Activated naive CD4-positive, alpha-beta T cell treated with anti-CD3 and anti-CD28 coated beads, Interleukin-2, amount 10 ng/mL, durations not matched to agents 7 days and 5 days (primary cell): ENCODE measurements at regions of chr5 and their contacts with region 1.

Region 1: GRCh38 chr5:58460732-58461286 is 923 bp upstream of the PLK2 start:
- DNase-seq: peak; percentile 93
- H3K4me3 Mint-ChIP-seq: peak overlapping the region; percentile 79
- H3K27ac Mint-ChIP-seq: peak overlapping the region; percentile 30
- H3K4me1 Mint-ChIP-seq: peaks cover 27% of the 10 kb centered on the region
- H3K27me3 Mint-ChIP-seq: peaks cover 21% of the 10 kb centered on the region

Region 2: GRCh38 chr5:57298295-57298984 is 1162.4 kb before region 1 on chr5:
- CTCF ChIA-PET with region 1: interaction called, 75 read pairs
- DNase-seq: peak; percentile 89
- H3K4me3 Mint-ChIP-seq: peak overlapping the region; percentile 47
- H3K27ac Mint-ChIP-seq: no peak overlapping the region
- H3K4me1 Mint-ChIP-seq: peaks cover 24% of the 10 kb centered on the region
- H3K27me3 Mint-ChIP-seq: peaks cover 13% of the 10 kb centered on the region

Region 3: DNA sequence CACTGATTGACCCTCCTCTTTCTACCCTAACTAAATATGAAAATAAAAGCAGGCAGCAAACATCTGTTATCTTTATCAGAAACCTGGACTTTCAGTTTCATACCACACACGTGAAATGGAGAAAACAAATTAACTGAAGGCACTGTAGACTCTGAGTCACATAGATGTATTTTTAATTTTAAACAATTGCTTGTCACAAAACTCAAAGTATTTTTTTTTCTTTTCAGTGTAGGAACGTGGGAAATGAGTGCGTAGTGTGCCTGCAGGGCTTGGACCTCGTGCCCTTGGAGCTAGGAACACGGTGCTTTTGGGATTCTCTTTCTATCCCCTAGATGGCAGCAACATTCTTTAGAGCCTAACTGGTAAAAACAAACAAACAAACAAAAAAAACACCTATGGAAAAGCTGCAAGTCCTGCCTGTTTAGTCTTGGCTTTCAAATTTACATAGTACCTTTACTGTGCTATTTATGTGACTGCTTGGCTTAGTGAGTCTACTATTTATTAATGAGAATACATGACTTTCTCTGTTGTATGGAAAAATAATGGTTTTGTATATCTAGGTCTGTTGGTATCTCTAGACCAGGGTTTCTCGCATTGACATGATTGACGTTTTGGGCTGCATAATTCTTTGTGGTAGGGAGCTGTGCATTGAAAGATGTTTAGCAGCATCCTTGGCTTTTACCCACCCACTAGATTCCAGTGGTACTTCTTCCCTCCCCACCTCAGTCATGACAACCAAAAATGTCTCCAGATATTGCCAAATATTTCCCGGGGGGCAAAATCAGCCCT is 961.4 kb before region 1 on chr5:
- CTCF ChIA-PET with region 1: interaction called, 70 read pairs
- DNase-seq: peak; percentile 38
- H3K4me3 Mint-ChIP-seq: peak overlapping the region; percentile 68
- H3K27ac Mint-ChIP-seq: peak overlapping the region; percentile 83
- H3K4me1 Mint-ChIP-seq: peaks cover 45% of the 10 kb centered on the region
- H3K27me3 Mint-ChIP-seq: peaks cover 4% of the 10 kb centered on the region

Region 4: GRCh38 chr5:57650360-57651069 is 810.3 kb before region 1 on chr5:
- CTCF ChIA-PET with region 1: interaction called, 22 read pairs
- DNase-seq: peak; percentile 41
- H3K4me3 Mint-ChIP-seq: no peak overlapping the region
- H3K27ac Mint-ChIP-seq: no peak overlapping the region
- H3K4me1 Mint-ChIP-seq: no peaks in the 10 kb centered on the region
- H3K27me3 Mint-ChIP-seq: peaks cover 16% of the 10 kb centered on the region

Region 5: DNA sequence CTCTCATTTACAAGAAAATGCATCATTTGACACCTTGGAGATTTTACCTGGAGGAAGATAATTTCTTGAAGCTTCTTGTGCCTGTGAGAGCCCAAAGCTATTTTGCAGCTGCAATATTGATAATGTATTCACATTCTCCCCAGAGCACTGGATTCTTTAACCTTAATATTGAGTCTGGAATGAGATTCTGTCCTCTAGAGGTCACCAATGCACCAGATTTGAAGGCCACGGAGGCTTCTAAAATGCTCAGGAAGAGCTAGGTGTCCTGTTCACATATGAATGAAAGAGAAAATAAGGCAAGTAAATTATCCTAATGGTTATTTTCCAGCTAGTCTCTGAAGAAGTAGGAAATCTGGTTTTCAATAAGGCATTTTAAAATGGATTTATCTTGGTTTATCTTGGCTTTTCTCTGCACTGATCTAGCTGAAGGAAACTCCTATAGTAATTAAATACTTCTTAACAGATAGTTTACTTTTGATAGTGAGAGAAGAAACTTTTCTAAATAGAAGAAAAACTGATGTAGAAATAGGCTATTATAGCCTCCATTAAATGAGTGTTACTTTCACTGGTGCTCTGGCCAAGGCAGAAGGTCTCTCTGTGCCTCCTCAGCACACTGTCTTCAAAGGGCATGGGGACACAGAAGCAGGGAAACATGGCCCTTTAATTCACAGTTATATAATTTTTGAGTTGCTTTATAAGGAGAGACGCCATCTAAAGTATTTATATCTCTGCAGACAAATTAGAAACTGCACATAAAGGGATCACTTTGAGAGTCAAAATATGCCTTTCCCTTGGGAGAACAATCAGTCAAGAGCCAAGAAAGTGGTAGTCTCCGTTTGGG is 681.2 kb before region 1 on chr5:
- CTCF ChIA-PET with region 1: interaction called, 54 read pairs
- DNase-seq: peak; percentile 27
- H3K4me3 Mint-ChIP-seq: no peak overlapping the region
- H3K27ac Mint-ChIP-seq: no peak overlapping the region
- H3K4me1 Mint-ChIP-seq: no peaks in the 10 kb centered on the region
- H3K27me3 Mint-ChIP-seq: peaks cover 5% of the 10 kb centered on the region

Region 6: DNA sequence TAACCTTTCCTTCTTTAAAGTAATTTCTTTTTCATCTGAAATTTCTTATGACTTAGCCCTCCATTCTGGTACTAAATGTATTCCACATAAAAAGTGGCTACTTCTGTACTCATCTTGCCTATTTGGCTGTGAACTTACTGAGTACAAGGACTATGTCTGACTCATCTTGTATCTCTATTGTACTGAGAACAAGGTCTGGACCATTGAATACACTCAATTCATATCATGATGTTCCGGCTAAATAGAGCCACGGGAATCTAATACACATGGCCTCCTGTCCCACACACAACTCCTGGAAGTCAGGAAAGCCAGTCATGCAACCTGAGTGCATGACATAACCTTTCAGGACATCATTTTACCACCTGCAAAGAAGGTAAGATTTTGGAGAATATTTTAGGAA is 204.8 kb before region 1 on chr5:
- CTCF ChIA-PET with region 1: no interaction called
- DNase-seq: no peak
- H3K4me3 Mint-ChIP-seq: no peak overlapping the region
- H3K27ac Mint-ChIP-seq: no peak overlapping the region
- H3K4me1 Mint-ChIP-seq: no peaks in the 10 kb centered on the region
- H3K27me3 Mint-ChIP-seq: no peaks in the 10 kb centered on the region

Region 7: DNA sequence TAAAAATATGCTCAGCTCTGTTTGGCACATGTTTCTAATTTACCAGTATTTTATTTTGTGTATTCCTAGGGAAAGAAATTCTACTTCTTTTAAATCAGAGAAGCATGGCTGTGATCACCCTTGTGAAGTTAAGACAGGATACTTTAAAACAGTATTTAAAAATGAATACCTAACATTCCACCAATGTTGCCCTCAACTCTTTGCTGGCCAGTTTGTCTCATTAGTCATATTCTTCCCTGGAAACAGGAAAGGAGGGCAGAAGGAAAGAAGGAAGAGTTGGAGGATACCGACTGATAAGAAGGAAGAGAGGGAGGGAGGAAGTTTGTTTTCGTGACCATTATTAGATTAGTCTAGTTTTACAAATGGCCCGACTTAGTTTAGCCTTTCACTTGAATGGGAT is 138.4 kb before region 1 on chr5:
- CTCF ChIA-PET with region 1: no interaction called
- DNase-seq: no peak
- H3K4me3 Mint-ChIP-seq: no peak overlapping the region
- H3K27ac Mint-ChIP-seq: no peak overlapping the region
- H3K4me1 Mint-ChIP-seq: no peaks in the 10 kb centered on the region
- H3K27me3 Mint-ChIP-seq: no peaks in the 10 kb centered on the region

Region 8: DNA sequence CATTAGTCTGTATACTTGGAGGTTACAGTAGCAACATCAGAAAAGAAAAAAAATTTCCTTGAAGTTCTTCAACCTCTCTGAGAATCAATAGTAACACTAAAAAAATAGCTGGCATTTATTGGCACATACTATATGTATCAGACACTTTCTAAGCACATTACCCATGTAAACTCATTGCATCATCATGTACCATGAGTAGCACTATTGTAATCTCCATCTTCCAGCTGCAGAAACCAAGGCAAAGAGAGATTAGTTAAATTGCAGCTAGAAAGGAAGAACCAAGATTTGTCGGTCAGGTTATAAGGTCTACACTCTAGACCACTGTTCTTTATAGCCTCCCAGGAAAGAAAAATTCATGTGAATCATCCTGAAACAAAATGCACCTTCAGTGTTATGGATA is 90.7 kb after region 1 on chr5:
- CTCF ChIA-PET with region 1: no interaction called
- DNase-seq: no peak
- H3K4me3 Mint-ChIP-seq: no peak overlapping the region
- H3K27ac Mint-ChIP-seq: no peak overlapping the region
- H3K4me1 Mint-ChIP-seq: no peaks in the 10 kb centered on the region
- H3K27me3 Mint-ChIP-seq: no peaks in the 10 kb centered on the region